Esophagus muscularis mucosa (tissue), 4 donors: ENCODE measurements at regions of chr15 and their contacts with region 1.

Region 1: GRCh38 chr15:48645558-48646330 is at the start of gene FBN1:
- DNase-seq: peak; percentile 94
- H3K4me3 ChIP-seq: peak within 1 kb of the TSS; percentile 90 to 93 (median 92)
- H3K27ac ChIP-seq: peak within 1 kb of the TSS; percentile 92 to 96 (median 95)
- H3K4me1 ChIP-seq: peaks cover 0 to 45% (median 36%) of the 10 kb centered on the region in 4 donors
- H3K27me3 ChIP-seq: no peaks in the 10 kb centered on the region
- CTCF ChIP-seq: no peak
- EP300 ChIP-seq: no peak
- POLR2A ChIP-seq: peak; percentile 48
- total RNA-seq, gene FBN1: 159 to 253 (median 226) TPM

Region 2: GRCh38 chr15:48233246-48233645 is 412.5 kb before region 1 on chr15:
- intact Hi-C with region 1: no loop called
- DNase-seq: no peak
- H3K4me3 ChIP-seq: no peak overlapping the region
- H3K27ac ChIP-seq: no peak overlapping the region
- H3K4me1 ChIP-seq: no peaks in the 10 kb centered on the region
- H3K27me3 ChIP-seq: no peaks in the 10 kb centered on the region
- CTCF ChIP-seq: no peak
- EP300 ChIP-seq: no peak
- POLR2A ChIP-seq: no peak

Region 3: DNA sequence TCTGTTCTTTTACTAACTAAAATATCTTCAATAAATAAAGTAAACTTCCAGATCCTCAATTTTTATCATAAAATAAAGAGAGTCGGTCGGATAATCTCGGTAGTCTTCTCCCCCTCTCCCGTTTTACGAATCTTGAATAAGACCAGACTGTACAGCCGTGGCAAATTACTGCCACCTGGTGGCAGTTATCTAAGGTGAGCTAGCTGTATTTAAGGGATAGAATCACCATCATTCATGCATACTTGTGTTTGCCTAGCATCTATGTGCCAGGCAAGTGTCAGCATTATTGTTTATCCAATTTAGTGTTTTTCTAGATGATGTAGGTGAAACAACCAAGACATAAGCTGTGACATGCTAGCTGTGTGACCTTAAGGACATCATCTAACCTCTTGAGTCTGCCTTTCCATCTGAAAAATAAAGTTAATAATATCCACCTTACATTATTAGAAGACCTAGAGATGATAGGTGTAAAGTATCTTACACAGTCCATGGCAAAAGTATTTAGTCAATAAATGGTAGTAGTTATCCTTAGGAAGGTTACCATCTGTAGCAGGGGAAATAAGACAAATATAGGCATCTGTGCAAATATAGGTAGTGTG is 293.2 kb before region 1 on chr15:
- intact Hi-C with region 1: loop called (anchors 10 kb)
- DNase-seq: no peak
- H3K4me3 ChIP-seq: no peak overlapping the region
- H3K27ac ChIP-seq: no peak overlapping the region
- H3K4me1 ChIP-seq: peaks cover 0 to 4% (median 0%) of the 10 kb centered on the region in 4 donors
- H3K27me3 ChIP-seq: no peaks in the 10 kb centered on the region
- CTCF ChIP-seq: peak; percentile 65 to 88 (median 70)
- EP300 ChIP-seq: no peak
- POLR2A ChIP-seq: no peak

Region 4: DNA sequence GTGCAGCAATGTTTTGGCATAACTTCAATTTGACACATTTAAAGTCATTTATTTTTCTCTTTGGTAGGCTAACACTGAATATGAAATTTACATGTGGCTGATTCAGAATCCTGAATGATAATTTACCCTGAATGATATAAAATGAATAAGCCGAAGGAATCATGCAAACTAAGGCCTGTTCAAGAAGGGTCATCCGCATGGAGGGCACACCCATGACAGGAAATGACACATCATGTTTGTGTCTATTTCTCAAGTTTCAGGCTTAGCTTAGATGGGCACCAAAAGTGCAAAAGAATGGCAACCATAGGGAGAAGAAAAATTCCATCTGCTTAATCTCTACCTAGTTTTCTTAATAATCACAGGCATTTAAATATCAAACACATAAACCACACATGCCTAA is 173.0 kb before region 1 on chr15:
- intact Hi-C with region 1: loop called (anchors 10 kb)
- DNase-seq: peak; percentile 31
- H3K4me3 ChIP-seq: no peak overlapping the region
- H3K27ac ChIP-seq: peak overlapping the region in 3 of 4 donors; percentile 24 to 56 (median 54)
- H3K4me1 ChIP-seq: peaks cover 0 to 35% (median 28%) of the 10 kb centered on the region in 4 donors
- H3K27me3 ChIP-seq: no peaks in the 10 kb centered on the region
- CTCF ChIP-seq: no peak
- EP300 ChIP-seq: no peak
- POLR2A ChIP-seq: no peak

Region 5: DNA sequence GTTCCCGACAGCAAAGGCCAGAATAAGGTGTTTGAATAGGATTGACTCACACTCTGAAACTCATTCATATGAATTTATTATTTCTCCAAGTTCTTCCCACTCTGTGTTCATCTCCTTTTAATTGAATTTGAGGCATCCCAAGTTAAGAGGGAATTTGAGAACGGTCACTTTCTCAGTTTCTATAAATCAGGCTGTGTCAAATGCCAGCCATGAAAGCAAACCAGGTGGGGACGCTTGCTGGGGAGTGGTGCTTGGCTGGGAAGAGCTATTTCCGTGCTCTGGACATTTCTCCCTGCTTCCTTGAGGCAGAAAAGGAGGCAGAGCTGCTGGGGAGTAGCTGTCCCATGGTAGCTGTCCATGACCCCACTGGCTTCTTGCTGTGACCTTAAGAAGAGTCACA is 116.8 kb before region 1 on chr15:
- intact Hi-C with region 1: loop called (anchors 5 kb)
- DNase-seq: no peak
- H3K4me3 ChIP-seq: no peak overlapping the region
- H3K27ac ChIP-seq: peak overlapping the region in 3 of 4 donors; percentile 71 to 77 (median 71)
- H3K4me1 ChIP-seq: peaks cover 0 to 66% (median 57%) of the 10 kb centered on the region in 4 donors
- H3K27me3 ChIP-seq: no peaks in the 10 kb centered on the region
- CTCF ChIP-seq: no peak
- EP300 ChIP-seq: no peak
- POLR2A ChIP-seq: no peak

Region 6: GRCh38 chr15:48682949-48683651 is 37.4 kb after region 1 on chr15:
- intact Hi-C with region 1: no loop called
- DNase-seq: no peak
- H3K4me3 ChIP-seq: no peak overlapping the region
- H3K27ac ChIP-seq: no peak overlapping the region
- H3K4me1 ChIP-seq: peaks cover 0 to 8% (median 3%) of the 10 kb centered on the region in 4 donors
- H3K27me3 ChIP-seq: no peaks in the 10 kb centered on the region
- CTCF ChIP-seq: no peak
- EP300 ChIP-seq: no peak
- POLR2A ChIP-seq: no peak

Region 7: DNA sequence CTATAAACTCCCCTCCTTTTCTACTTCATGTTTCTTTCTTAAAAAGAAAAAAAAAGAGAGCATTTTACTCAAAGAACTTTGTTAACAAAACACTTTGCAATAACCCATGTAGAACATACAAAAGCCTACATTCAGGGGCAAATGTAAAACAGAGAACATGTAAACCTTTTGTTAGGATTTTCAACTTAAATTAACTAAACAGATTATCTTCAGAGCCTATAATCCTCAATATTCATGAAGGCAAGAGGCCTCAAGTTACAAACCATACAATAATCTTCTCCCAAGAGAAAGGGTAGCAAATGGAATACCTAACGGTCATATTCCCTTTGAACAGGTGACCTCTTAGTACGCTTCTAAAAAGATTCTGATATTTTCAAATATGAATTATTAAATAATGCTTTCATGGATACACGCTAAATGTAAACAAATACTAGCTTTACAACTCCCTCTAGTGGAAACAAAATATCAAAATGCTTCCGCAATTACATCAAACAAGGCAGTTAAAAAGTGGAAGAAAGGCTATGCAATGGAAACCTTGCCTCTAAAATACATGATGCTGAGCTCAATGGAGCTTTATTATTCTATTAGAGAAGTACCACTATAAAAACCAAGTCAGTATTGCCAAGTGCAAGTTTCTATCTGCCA is 155.2 kb after region 1 on chr15:
- intact Hi-C with region 1: loop called (anchors 10 kb)
- DNase-seq: no peak
- H3K4me3 ChIP-seq: no peak overlapping the region
- H3K27ac ChIP-seq: no peak overlapping the region
- H3K4me1 ChIP-seq: peaks cover 0 to 28% (median 25%) of the 10 kb centered on the region in 4 donors
- H3K27me3 ChIP-seq: no peaks in the 10 kb centered on the region
- CTCF ChIP-seq: peak; percentile 38 to 49 (median 40)
- EP300 ChIP-seq: no peak
- POLR2A ChIP-seq: no peak